CD4-positive, alpha-beta T cell (primary cell): ENCODE measurements at regions of chr10 and their contacts with region 1.

Region 1: GRCh38 chr10:95445837-95446486 is 115.2 kb downstream of the SORBS1 start:
- DNase-seq: peak in 6 of 14 experiments; percentile 5 to 58 (median 24)
- ATAC-seq: peak; percentile 43
- H3K4me3 ChIP-seq: no peak overlapping the region
- H3K4me3 Mint-ChIP-seq: no peak overlapping the region
- H3K27ac ChIP-seq: no peak overlapping the region
- H3K27ac Mint-ChIP-seq: no peak overlapping the region
- H3K4me1 ChIP-seq: no peaks in the 10 kb centered on the region
- H3K4me1 Mint-ChIP-seq: no peaks in the 10 kb centered on the region
- H3K27me3 ChIP-seq: no peaks in the 10 kb centered on the region
- H3K27me3 Mint-ChIP-seq: peaks cover 4% of the 10 kb centered on the region
- CTCF ChIP-seq: peak; percentile 79

Region 2: GRCh38 chr10:95133016-95133752 is 312.8 kb before region 1 on chr10:
- CTCF ChIA-PET with region 1: no interaction called
- POLR2A ChIA-PET with region 1: no interaction called
- intact Hi-C with region 1: loop called in 1 of 2 experiments (anchors 10 kb)
- DNase-seq: peak; percentile 18 to 78 (median 44)
- ATAC-seq: no peak
- H3K4me3 ChIP-seq: no peak overlapping the region
- H3K4me3 Mint-ChIP-seq: no peak overlapping the region
- H3K27ac ChIP-seq: no peak overlapping the region
- H3K27ac Mint-ChIP-seq: no peak overlapping the region
- H3K4me1 ChIP-seq: no peaks in the 10 kb centered on the region
- H3K4me1 Mint-ChIP-seq: no peaks in the 10 kb centered on the region
- H3K27me3 ChIP-seq: no peaks in the 10 kb centered on the region
- H3K27me3 Mint-ChIP-seq: no peaks in the 10 kb centered on the region
- CTCF ChIP-seq: peak; percentile 47